ENCODE measurements at regions of chr13 and their contacts with region 1.

Region 1: GRCh38 chr13:27620377-27621115 is at the start of gene LNX2:
- DNase-seq: peak; percentile 99
- total RNA-seq, gene LNX2: 15.8 TPM

Region 2: DNA sequence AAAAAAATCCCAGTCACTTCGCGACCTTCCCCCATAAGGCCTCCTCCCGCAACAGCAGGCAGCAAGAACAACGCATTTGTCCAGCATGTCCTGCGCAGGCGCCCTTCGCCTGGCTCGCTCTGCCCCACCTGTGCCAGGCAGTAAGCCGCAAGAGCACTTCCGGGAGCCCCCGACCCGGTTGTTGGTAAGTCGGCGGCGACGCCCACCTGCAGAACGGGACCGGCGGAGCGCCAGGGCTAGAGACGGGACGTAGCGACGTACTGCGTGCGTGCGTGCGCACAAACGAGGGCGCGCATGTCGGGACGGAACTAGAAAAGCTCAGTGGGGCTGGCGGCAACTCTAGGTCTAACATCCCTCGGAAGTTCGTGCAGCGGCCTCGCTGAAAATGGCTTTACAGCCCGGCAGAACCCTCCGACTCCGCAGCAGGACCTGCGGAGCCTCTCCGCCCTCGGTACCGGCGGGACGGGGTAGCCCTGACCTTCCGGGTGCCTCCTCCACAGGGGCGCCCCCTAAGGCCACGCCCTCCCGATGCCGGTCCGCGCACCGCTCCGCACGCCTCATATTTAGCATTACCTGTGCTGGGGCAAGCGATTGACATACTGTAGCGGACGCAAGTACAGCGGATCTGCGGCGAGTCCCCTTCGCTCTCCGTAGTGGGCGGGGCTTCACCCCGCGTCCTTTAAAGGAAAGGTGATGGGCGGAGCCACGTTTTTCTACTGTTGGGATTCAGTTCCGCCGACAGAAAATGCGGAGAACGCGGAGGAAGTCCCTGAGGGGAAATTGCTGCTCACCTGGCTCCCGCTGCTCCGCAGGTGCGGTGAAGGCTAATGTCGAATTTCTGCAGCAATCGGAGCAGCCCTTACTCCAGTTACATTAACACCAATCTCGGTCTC is 170.4 kb before region 1 on chr13 and contains the start of gene MTIF3:
- intact Hi-C with region 1: loop called (anchors 1 kb)
- DNase-seq: peak; percentile 95
- total RNA-seq, gene MTIF3: 83.8 TPM

Region 3: GRCh38 chr13:27770809-27771208 is 150.3 kb after region 1 on chr13:
- intact Hi-C with region 1: no loop called
- DNase-seq: no peak